Naive thymus-derived CD4-positive, alpha-beta T cell (primary cell): ENCODE measurements at regions of chr20 and their contacts with region 1.

Region 1: DNA sequence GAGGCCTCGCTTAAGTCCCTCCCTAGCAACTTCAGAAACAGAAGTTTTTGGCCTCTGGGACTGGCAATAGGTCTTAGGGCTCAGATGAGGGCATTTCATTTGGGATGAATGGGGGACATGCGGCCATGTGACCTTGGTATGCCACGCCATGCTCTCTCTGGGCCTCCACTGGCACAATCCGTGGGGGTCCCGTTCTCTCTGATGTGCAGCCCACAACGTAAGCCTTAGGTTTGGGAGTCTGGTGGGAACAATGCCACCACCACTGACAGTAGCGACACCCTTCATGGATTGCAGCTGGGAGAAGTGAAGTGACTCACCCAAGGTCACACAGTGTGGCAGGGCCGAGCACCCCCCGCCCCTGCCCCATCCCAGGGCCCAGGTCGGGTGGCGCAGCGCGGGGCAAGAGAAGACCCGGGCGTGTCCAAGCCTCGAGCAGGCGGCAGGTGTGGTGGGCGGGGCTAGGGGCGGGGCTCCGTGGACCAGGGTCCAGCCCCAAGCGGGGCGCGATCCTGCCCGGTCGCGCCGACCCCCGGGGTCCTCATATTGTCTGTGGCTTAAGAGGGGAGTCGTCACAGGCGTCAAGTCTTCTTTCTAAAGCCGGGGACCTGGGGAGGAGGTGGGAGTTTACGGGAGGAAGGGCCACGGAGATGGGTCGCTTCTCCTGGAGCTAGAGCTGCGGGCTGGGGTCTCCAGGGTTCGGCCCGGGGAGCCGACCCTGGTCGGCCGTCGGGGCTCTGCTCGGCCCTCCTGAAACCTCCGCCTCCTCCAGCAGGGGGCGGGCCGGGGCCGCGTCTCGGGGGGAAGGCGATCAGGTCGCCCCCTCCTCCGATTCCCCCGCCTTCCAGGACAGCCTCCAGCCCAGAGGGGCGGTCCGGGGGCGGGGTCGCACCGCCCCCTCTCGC is 698 bp upstream of the CEBPB start:
- DNase-seq: peak; percentile 73 to 92 (median 85)
- ATAC-seq: peak; percentile 84
- H3K4me3 ChIP-seq: peak overlapping the region; percentile 55
- H3K4me3 Mint-ChIP-seq: peak overlapping the region; percentile 25 to 93 (median 62)
- H3K27ac ChIP-seq: peak overlapping the region; percentile 77
- H3K27ac Mint-ChIP-seq: peak overlapping the region in 7 of 9 donors; percentile 16 to 71 (median 64)
- H3K4me1 ChIP-seq: peaks cover 11 to 21% of the 10 kb centered on the region in 2 donors
- H3K4me1 Mint-ChIP-seq: peaks cover 23 to 31% (median 26%) of the 10 kb centered on the region in 7 donors
- H3K27me3 ChIP-seq: no peaks in the 10 kb centered on the region
- H3K27me3 Mint-ChIP-seq: peaks cover 10 to 12% (median 11%) of the 10 kb centered on the region in 5 donors

Region 2: GRCh38 chr20:49812463-49813304 is 377.2 kb before region 1 on chr20 and contains the start of gene SLC9A8:
- CTCF ChIA-PET with region 1: no interaction called
- POLR2A ChIA-PET with region 1: no interaction called
- intact Hi-C with region 1: loop called in 1 of 2 experiments (anchors 5 kb)
- DNase-seq: peak; percentile 67 to 85 (median 75)
- ATAC-seq: peak; percentile 93
- H3K4me3 ChIP-seq: peak within 1 kb of the TSS; percentile 81
- H3K4me3 Mint-ChIP-seq: peak within 1 kb of the TSS; percentile 90 to 99 (median 94)
- H3K27ac ChIP-seq: peak within 1 kb of the TSS; percentile 95
- H3K27ac Mint-ChIP-seq: peak within 1 kb of the TSS; percentile 94 to 98 (median 96)
- H3K4me1 ChIP-seq: peaks cover 12 to 17% of the 10 kb centered on the region in 2 donors
- H3K4me1 Mint-ChIP-seq: peaks cover 13 to 44% (median 39%) of the 10 kb centered on the region in 7 donors
- H3K27me3 ChIP-seq: no peaks in the 10 kb centered on the region
- H3K27me3 Mint-ChIP-seq: no peaks in the 10 kb centered on the region
- total RNA-seq, gene SLC9A8: 21.7 to 42.5 (median 25.7) TPM

Region 3: GRCh38 chr20:50179507-50180016 is 10.4 kb before region 1 on chr20:
- CTCF ChIA-PET with region 1: interaction called, 6 read pairs
- POLR2A ChIA-PET with region 1: interaction called, 4 read pairs
- intact Hi-C with region 1: loop called in 1 of 2 experiments (anchors 1 kb)
- DNase-seq: no peak
- ATAC-seq: no peak
- H3K4me3 ChIP-seq: no peak overlapping the region
- H3K4me3 Mint-ChIP-seq: no peak overlapping the region
- H3K27ac ChIP-seq: no peak overlapping the region
- H3K27ac Mint-ChIP-seq: no peak overlapping the region
- H3K4me1 ChIP-seq: no peaks in the 10 kb centered on the region
- H3K4me1 Mint-ChIP-seq: peaks cover 0 to 6% (median 0%) of the 10 kb centered on the region in 7 donors
- H3K27me3 ChIP-seq: no peaks in the 10 kb centered on the region
- H3K27me3 Mint-ChIP-seq: peaks cover 3 to 15% (median 8%) of the 10 kb centered on the region in 5 donors

Region 4: DNA sequence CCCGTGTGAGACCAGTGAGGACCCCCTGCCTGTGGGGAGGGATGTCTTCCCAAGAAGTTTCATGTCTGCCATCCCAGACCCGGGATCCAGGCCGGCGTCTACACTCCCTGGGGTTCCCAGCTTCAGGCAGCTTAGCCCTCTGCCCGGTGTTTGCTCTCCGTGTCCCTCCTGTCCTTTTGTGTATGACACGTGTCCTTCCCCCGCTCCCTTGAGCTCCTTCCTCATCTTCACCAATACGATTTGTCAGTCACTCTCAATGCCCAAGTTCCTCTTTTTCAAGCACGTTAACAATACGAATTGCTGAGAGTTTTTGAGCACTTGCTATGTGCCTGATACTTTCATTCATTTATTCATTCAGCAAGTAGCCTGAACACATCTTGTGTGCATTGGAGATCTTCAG is 204.6 kb after region 1 on chr20:
- CTCF ChIA-PET with region 1: no interaction called
- POLR2A ChIA-PET with region 1: no interaction called
- intact Hi-C with region 1: no loop called
- DNase-seq: no peak
- ATAC-seq: peak; percentile 55
- H3K4me3 ChIP-seq: no peak overlapping the region
- H3K4me3 Mint-ChIP-seq: no peak overlapping the region
- H3K27ac ChIP-seq: no peak overlapping the region
- H3K27ac Mint-ChIP-seq: peak overlapping the region in 1 of 9 donors; percentile 16
- H3K4me1 ChIP-seq: no peaks in the 10 kb centered on the region
- H3K4me1 Mint-ChIP-seq: peaks cover 0 to 9% (median 0%) of the 10 kb centered on the region in 7 donors
- H3K27me3 ChIP-seq: no peaks in the 10 kb centered on the region
- H3K27me3 Mint-ChIP-seq: peaks cover 0 to 8% (median 0%) of the 10 kb centered on the region in 5 donors

Region 5: GRCh38 chr20:50460460-50461267 is 270.7 kb after region 1 on chr20:
- CTCF ChIA-PET with region 1: interaction called, 51 read pairs
- POLR2A ChIA-PET with region 1: interaction called, 6 read pairs
- intact Hi-C with region 1: loop called (anchors 1 kb)
- DNase-seq: peak; percentile 54 to 87 (median 74)
- ATAC-seq: peak; percentile 95
- H3K4me3 ChIP-seq: no peak overlapping the region
- H3K4me3 Mint-ChIP-seq: no peak overlapping the region
- H3K27ac ChIP-seq: no peak overlapping the region
- H3K27ac Mint-ChIP-seq: peak overlapping the region in 1 of 9 donors; percentile 65
- H3K4me1 ChIP-seq: no peaks in the 10 kb centered on the region
- H3K4me1 Mint-ChIP-seq: peaks cover 0 to 18% (median 4%) of the 10 kb centered on the region in 7 donors
- H3K27me3 ChIP-seq: no peaks in the 10 kb centered on the region
- H3K27me3 Mint-ChIP-seq: peaks cover 5 to 14% (median 7%) of the 10 kb centered on the region in 5 donors

Region 6: GRCh38 chr20:50575847-50576720 is 386.2 kb after region 1 on chr20:
- CTCF ChIA-PET with region 1: interaction called, 3 read pairs
- POLR2A ChIA-PET with region 1: no interaction called
- intact Hi-C with region 1: loop called (anchors 1 to 2 kb)
- DNase-seq: peak; percentile 34 to 67 (median 58)
- ATAC-seq: peak; percentile 92
- H3K4me3 ChIP-seq: no peak overlapping the region
- H3K4me3 Mint-ChIP-seq: no peak overlapping the region
- H3K27ac ChIP-seq: no peak overlapping the region
- H3K27ac Mint-ChIP-seq: peak overlapping the region in 8 of 9 donors; percentile 12 to 77 (median 56)
- H3K4me1 ChIP-seq: peaks cover 0 to 1% of the 10 kb centered on the region in 2 donors
- H3K4me1 Mint-ChIP-seq: peaks cover 12 to 40% (median 31%) of the 10 kb centered on the region in 7 donors
- H3K27me3 ChIP-seq: no peaks in the 10 kb centered on the region
- H3K27me3 Mint-ChIP-seq: no peaks in the 10 kb centered on the region

Region 7: GRCh38 chr20:50746138-50746940 is 556.4 kb after region 1 on chr20:
- CTCF ChIA-PET with region 1: interaction called, 3 read pairs
- POLR2A ChIA-PET with region 1: no interaction called
- intact Hi-C with region 1: loop called (anchors 1 to 5 kb)
- DNase-seq: no peak
- ATAC-seq: no peak
- H3K4me3 ChIP-seq: no peak overlapping the region
- H3K4me3 Mint-ChIP-seq: no peak overlapping the region
- H3K27ac ChIP-seq: no peak overlapping the region
- H3K27ac Mint-ChIP-seq: peak overlapping the region in 7 of 9 donors; percentile 17 to 80 (median 50)
- H3K4me1 ChIP-seq: no peaks in the 10 kb centered on the region
- H3K4me1 Mint-ChIP-seq: peaks cover 10 to 25% (median 19%) of the 10 kb centered on the region in 7 donors
- H3K27me3 ChIP-seq: no peaks in the 10 kb centered on the region
- H3K27me3 Mint-ChIP-seq: no peaks in the 10 kb centered on the region